Aorta (tissue), 5 donors: ENCODE measurements at regions of chr3 and their contacts with region 1.

Region 1: DNA sequence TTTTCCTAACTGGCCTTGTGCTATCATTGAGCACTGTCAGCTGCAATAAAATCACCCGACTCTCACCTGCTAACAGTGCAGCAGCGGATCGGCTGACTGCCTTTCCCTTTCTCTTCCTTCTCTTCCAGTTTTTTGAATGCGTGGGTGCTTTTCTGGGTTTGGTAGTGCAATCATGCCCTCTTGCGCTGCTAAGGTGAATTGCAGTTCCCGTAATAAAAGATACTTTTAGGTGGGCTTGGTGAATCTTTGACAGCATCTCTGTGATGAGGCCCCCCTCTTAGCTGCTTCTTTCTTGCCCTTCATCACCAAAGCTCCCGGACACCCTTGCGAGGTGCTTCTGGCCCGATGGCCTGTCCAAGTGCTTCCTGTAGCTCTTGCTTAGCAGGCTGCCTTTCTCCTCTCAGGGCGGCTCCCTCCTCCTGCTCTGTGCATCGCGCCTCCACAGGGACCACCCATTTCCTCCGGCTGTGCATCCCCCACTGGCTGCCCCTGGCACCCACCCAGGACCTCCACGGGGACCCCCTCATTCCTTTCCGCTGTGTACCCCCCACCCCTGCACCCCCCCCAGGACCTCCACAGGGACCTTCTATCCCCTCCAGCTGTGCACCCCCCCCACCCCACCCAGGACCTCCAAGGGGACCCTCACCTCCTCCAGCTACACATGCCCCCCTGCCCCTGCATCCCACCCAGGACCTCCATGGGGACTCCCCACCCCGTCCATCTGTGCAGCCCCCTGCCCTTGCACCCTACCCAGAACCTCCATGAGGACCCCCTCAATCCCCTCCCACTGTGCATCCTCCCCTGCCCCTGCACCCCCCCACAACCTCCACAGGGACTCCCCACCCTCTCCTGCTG is 50.8 kb upstream of the RPL32 start:
- DNase-seq: no peak
- ATAC-seq: peak; percentile 67
- H3K4me3 ChIP-seq: no peak overlapping the region
- H3K27ac ChIP-seq: peak overlapping the region in 1 of 2 donors; percentile 7
- H3K4me1 ChIP-seq: no peaks in the 10 kb centered on the region
- H3K27me3 ChIP-seq: no peaks in the 10 kb centered on the region

Region 2: DNA sequence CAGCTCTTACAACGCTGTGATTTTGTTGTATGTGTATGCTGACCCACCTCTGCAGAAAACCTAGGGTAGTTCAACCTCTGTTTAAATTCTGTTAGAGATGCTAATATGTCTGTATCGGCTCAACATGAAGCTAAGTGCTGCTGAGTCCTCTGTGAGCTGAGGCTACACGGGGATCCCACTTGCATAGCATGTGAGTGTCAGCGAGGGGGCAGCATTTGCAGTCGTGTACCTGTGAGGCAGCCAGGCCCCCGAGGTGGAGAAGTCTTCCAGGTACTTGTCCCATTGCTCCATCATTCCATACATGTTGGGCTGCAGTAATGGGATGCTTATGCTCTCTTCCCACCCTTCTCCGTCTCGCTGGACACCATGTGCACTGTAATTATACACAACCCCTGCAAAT is 350.6 kb before region 1 on chr3:
- intact Hi-C with region 1: no loop called
- DNase-seq: no peak
- ATAC-seq: no peak
- H3K4me3 ChIP-seq: no peak overlapping the region
- H3K27ac ChIP-seq: no peak overlapping the region
- H3K4me1 ChIP-seq: no peaks in the 10 kb centered on the region
- H3K27me3 ChIP-seq: no peaks in the 10 kb centered on the region

Region 3: GRCh38 chr3:12868039-12869034 is 23.9 kb before region 1 on chr3:
- intact Hi-C with region 1: loop called (anchors 1 to 2 kb)
- DNase-seq: peak; percentile 85 to 92
- ATAC-seq: peak; percentile 93
- H3K4me3 ChIP-seq: no peak overlapping the region
- H3K27ac ChIP-seq: no peak overlapping the region
- H3K4me1 ChIP-seq: no peaks in the 10 kb centered on the region
- H3K27me3 ChIP-seq: no peaks in the 10 kb centered on the region